ENCODE measurements at regions of chr13 and their contacts with region 1.

Region 1: GRCh38 chr13:27362064-27362883 is 62.1 kb upstream of the GTF3A start:
- DNase-seq: no peak
- ATAC-seq: peak; percentile 95
- H3K4me3 ChIP-seq: peak overlapping the region; percentile 50 to 77
- H3K27ac ChIP-seq: peak overlapping the region; percentile 68
- H3K4me1 ChIP-seq: peaks cover 28% of the 10 kb centered on the region
- H3K27me3 ChIP-seq: no peaks in the 10 kb centered on the region
- CTCF ChIP-seq: peak; percentile 91

Region 2: DNA sequence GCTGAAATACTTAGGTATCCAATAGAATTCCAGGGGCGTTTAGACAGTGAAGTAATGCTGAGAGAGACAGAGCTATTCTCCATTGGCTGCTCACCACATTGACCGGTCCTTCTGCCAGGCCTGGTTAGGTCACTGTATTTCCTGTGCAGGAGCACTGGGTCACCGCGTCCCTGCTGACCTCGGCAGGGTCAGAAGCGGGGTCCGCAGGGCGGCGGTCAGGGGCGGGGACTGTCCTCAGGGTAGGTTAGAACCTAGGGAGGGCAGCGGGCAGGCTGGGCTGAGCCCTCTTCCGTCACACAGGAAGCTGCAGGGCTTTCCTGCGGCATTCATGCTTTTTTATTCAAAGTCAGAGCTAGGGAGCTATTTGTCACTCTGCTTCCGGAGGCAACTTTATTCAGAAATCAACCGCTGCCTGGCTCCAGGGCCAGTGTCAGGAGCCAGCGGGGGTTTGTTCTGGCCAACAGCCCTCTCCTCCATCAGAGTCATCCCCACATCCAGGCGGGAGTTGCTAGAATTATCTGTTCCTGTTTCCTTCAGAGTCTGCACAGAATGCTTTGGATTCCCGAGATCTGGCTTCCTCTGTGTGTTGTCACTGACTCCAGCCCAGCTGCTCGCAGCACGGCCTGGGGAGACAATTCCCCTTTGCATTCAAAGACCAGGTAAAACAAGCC is 886.0 kb before region 1 on chr13:
- CTCF ChIA-PET with region 1: no interaction called
- POLR2A ChIA-PET with region 1: no interaction called
- in situ Hi-C with region 1: no loop called
- intact Hi-C with region 1: no loop called
- DNase-seq: no peak
- ATAC-seq: no peak
- H3K4me3 ChIP-seq: no peak overlapping the region
- H3K27ac ChIP-seq: no peak overlapping the region
- H3K4me1 ChIP-seq: no peaks in the 10 kb centered on the region
- H3K27me3 ChIP-seq: no peaks in the 10 kb centered on the region
- CTCF ChIP-seq: no peak

Region 3: DNA sequence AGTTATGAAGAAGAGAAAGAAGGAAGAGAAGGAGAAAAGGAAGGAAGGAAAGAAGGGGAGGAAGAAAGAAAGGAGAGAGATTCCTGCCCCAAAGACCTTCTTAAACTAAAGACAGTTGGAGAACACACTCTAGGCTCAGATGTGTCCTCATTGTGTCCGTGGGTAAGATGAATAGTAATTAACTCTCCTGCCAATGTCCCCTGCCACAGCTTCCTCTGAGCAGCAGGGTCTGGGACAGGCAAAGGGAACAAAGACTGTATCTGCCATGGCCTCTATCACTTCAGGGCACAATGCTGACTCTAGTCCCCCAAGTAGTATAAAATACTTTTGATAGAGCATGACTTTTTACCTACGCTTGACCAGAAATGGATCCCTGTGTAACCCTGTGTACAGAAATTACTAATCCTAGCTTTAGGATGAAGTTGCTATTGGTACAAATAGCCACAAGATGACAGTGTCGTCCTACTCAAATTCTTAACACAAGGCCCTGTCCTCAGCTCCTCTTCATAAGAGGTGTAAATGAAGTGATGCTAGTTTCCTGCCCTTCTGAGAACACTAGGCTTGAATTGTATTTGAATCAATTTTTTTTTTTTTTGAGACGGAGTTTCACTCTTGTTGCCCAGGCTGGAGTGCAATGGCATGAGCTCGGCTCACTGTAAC is 415.5 kb before region 1 on chr13:
- CTCF ChIA-PET with region 1: interaction called, 12 read pairs
- POLR2A ChIA-PET with region 1: no interaction called
- in situ Hi-C with region 1: no loop called
- intact Hi-C with region 1: loop called (anchors 2 kb)
- DNase-seq: peak; percentile 50
- ATAC-seq: peak; percentile 93
- H3K4me3 ChIP-seq: no peak overlapping the region
- H3K27ac ChIP-seq: peak overlapping the region; percentile 94
- H3K4me1 ChIP-seq: peaks cover 43% of the 10 kb centered on the region
- H3K27me3 ChIP-seq: no peaks in the 10 kb centered on the region
- CTCF ChIP-seq: peak; percentile 87

Region 4: GRCh38 chr13:27533155-27533643 is 170.9 kb after region 1 on chr13:
- CTCF ChIA-PET with region 1: no interaction called
- POLR2A ChIA-PET with region 1: no interaction called
- in situ Hi-C with region 1: no loop called
- intact Hi-C with region 1: loop called (anchors 5 kb)
- DNase-seq: peak; percentile 20
- ATAC-seq: peak; percentile 99
- H3K4me3 ChIP-seq: peak overlapping the region; percentile 23 to 54; a peak in 3 of 4 replicates
- H3K27ac ChIP-seq: no peak overlapping the region
- H3K4me1 ChIP-seq: peaks cover 3% of the 10 kb centered on the region; the same call in 1 of the 2 replicates
- H3K27me3 ChIP-seq: no peaks in the 10 kb centered on the region
- CTCF ChIP-seq: peak; percentile 92

Region 5: DNA sequence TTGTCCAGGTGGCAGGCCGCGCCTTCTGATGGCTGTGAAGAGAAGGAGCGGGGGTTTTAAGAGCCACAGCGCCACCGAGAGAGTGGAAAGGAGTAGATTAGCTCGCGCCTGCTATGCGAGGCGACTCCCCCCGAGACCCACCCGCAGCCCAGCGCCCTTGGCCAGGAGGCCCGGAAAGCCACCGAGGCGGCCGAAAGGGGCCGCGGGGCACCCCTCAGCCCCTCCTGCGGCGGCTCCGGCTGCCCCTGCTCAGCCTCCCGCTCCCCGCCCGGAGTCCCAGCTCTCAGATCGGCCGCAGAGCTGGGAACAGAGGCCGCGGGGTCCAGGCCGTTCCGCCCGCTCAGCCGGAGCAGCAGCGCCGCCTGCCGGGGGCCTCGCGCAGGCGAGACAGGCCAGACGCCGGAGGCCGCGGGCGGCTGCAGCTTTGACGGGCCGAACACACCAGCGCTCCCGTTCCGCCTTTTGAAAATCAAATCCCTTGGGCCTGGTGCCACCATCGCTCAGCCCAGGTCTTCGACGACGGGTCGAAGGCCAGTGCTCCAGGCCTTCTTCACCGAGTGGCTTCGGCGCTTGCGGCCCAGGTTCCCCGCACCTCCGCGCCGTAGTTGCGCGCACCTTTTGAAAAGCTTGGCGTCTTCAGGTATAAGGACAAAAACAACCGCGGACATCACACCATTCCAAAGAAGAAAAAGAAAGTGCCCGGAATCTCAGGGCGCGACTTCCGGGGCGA is 591.6 kb after region 1 on chr13:
- CTCF ChIA-PET with region 1: no interaction called
- POLR2A ChIA-PET with region 1: no interaction called
- in situ Hi-C with region 1: no loop called
- intact Hi-C with region 1: loop called (anchors 10 kb)
- DNase-seq: no peak
- ATAC-seq: peak; percentile 97
- H3K4me3 ChIP-seq: peak overlapping the region; percentile 52 to 66
- H3K27ac ChIP-seq: peak overlapping the region; percentile 67
- H3K4me1 ChIP-seq: peaks cover 9% of the 10 kb centered on the region
- H3K27me3 ChIP-seq: no peaks in the 10 kb centered on the region
- CTCF ChIP-seq: peak; percentile 96

Region 6: GRCh38 chr13:27980280-27980998 is 618.2 kb after region 1 on chr13:
- CTCF ChIA-PET with region 1: interaction called, 4 read pairs
- POLR2A ChIA-PET with region 1: no interaction called
- in situ Hi-C with region 1: no loop called
- intact Hi-C with region 1: loop called (anchors 10 kb)
- DNase-seq: no peak
- ATAC-seq: no peak
- H3K4me3 ChIP-seq: no peak overlapping the region
- H3K27ac ChIP-seq: no peak overlapping the region
- H3K4me1 ChIP-seq: no peaks in the 10 kb centered on the region
- H3K27me3 ChIP-seq: no peaks in the 10 kb centered on the region
- CTCF ChIP-seq: no peak

Measured in Panc1 (cell line).